ENCODE measurements at regions of chr3 and their contacts with region 1.

Region 1: DNA sequence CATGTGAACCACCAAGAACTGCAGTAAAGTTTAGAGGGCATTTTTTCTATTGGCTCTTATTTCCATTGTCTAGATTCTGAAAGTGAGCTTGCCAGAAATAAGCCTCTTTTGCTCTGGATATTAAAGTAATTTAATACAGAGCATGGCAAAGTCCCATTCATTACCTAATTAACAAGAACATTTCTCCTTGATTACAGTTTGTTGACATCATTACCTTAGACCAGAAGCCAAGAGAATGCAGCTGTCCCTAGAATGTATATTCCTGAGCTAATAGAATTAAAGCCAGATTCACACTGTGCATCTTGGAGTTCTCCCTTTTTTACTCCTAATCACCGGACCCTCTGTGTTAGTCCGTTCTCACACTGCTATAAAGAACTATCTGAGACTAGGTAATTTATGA is 46.4 kb upstream of the TM4SF4 start:
- DNase-seq: no peak
- H3K4me3 ChIP-seq: no peak overlapping the region
- H3K27ac ChIP-seq: no peak overlapping the region
- H3K4me1 ChIP-seq: no peaks in the 10 kb centered on the region
- H3K27me3 ChIP-seq: no peaks in the 10 kb centered on the region
- CTCF ChIP-seq: no peak
- POLR2A ChIP-seq: no peak

Region 2: DNA sequence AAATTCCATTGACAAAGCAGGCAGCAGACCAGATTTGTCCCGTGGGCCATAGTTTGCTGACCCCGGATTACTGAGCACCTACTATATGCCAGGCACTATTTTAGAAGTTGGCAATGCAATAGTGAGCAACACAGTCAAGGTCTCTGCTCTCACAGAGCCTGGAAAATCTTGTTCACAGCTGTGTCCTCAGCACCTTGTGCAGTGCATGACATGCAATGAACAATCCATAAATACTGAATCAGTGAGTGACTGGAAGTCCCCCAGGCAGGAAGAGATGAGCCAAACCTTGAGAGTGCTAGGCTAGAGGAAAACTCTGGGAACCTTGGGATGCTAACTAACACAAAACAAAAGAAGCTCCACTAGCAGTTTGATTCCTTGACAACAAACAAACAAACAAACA is 65.0 kb before region 1 on chr3:
- intact Hi-C with region 1: loop called (anchors 2 kb)
- DNase-seq: no peak
- H3K4me3 ChIP-seq: no peak overlapping the region
- H3K27ac ChIP-seq: no peak overlapping the region
- H3K4me1 ChIP-seq: no peaks in the 10 kb centered on the region
- H3K27me3 ChIP-seq: no peaks in the 10 kb centered on the region
- CTCF ChIP-seq: no peak
- POLR2A ChIP-seq: no peak

Measured in breast epithelium (tissue), 4 donors.